Aorta (tissue), 5 donors: ENCODE measurements at regions of chr7 and their contacts with region 1.

Region 1: GRCh38 chr7:140653319-140654108 is 12.9 kb upstream of the DENND2A start:
- DNase-seq: peak; percentile 64 to 69
- ATAC-seq: peak; percentile 85
- H3K4me3 ChIP-seq: no peak overlapping the region
- H3K27ac ChIP-seq: no peak overlapping the region
- H3K4me1 ChIP-seq: no peaks in the 10 kb centered on the region
- H3K27me3 ChIP-seq: no peaks in the 10 kb centered on the region

Region 2: GRCh38 chr7:140479062-140479738 is 174.3 kb before region 1 on chr7 and contains the start of gene MKRN1:
- intact Hi-C with region 1: loop called in 1 of 2 experiments (anchors 5 kb)
- DNase-seq: peak; percentile 96 to 97
- ATAC-seq: peak; percentile 95
- H3K4me3 ChIP-seq: peak within 1 kb of the TSS; percentile 90 to 93
- H3K27ac ChIP-seq: peak within 1 kb of the TSS in 1 of 2 donors; percentile 28
- H3K4me1 ChIP-seq: no peaks in the 10 kb centered on the region
- H3K27me3 ChIP-seq: no peaks in the 10 kb centered on the region
- total RNA-seq, gene MKRN1: 68.5 to 69.2 TPM

Region 3: DNA sequence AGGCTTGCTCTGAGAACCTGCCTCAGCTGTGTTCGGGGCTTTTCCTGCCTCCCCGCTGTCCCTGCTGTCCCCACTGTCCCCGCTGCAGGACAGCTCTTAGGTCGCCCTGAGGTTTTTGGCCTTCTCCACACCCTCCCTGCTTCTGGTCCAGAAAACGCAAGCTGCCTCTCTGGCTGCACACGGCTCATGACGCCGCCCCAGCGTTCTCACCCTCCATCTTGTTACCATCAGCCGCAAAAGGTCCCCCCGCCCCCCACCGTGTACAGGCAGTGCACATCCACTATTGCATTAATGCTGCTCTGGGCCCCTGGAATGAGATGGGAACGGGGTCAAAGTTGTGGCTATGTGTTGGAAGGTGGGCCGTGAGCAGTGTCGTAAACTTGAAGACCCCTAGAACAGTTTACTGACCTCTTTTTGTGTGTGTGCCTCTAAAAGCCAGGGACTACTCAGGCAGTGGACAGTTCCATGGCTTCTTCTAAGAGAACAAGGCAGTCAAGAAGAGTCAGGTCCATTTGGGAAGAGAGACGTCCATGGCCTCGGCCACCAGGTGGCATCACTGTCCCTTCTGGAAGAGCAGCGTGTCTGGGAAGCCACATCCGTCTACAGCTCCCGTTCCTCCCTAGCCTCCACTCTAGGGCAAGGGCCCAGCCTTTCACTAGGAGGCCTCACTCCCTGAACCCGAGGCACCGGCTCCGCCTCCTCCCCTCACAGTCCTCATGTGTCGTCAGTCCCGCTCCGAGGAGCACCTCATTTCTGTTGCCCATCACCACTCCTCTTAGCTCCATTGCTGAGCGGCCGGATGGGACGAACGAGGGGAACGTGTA is 135.8 kb before region 1 on chr7:
- intact Hi-C with region 1: loop called (anchors 1 to 2 kb)
- DNase-seq: peak; percentile 91 to 96
- ATAC-seq: peak; percentile 94
- H3K4me3 ChIP-seq: no peak overlapping the region
- H3K27ac ChIP-seq: no peak overlapping the region
- H3K4me1 ChIP-seq: no peaks in the 10 kb centered on the region
- H3K27me3 ChIP-seq: no peaks in the 10 kb centered on the region

Region 4: DNA sequence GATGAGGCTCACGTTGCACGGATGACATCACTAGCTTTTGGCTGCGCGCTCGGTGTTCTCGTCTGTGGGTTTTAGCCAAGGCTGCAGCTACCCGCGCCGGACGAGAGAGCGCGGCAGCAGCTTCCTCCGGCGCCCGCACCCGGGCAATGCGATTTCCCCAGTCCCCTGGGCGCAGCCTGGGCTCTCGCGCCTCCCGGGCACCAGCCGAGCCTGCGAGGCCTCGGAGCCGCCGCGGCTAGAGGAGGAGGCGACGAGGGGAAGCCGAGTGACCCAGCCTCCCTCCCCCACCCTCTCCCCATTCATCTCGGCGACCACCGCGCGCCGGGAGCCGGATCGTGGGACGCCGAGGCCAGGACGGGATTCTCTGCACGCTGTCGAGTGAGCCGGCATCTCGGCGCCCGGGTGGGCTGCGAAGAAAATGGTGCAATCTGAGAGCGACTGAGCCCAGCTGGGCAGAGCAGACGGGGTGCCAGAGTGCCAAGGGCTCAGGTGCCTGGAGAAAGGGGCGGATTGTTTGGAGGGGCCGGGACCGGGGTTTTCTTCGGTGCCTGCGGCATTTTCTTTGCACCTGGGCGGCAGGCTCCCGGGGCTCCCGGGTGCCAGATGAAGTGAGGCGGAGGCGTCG is 419.1 kb after region 1 on chr7:
- intact Hi-C with region 1: no loop called
- DNase-seq: peak; percentile 58 to 79
- ATAC-seq: peak; percentile 79
- H3K4me3 ChIP-seq: peak overlapping the region in 1 of 2 donors; percentile 0
- H3K27ac ChIP-seq: no peak overlapping the region
- H3K4me1 ChIP-seq: no peaks in the 10 kb centered on the region
- H3K27me3 ChIP-seq: no peaks in the 10 kb centered on the region